ENCODE measurements at regions of chr1 and their contacts with region 1.

Region 1: DNA sequence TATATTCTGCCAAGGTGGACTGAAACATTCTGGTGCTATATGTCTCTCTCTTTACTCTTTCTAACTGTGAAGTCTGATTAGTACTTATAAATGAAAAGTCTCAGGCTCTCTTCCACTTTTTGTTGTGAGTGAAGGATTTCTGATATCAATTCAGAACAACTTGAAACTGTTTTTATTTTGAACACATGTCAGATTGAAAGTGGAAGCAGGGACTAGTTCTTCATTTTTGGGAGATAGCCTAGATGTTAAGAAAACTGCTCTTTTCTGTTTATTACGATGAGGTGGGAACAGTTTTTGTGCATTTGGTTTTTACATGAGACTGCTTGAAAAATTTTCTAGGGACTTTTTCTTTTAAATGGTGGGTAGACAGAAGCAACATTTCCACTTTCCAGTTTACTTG is 14.5 kb upstream of the GBP3 start:
- DNase-seq: no peak
- ATAC-seq: no peak
- H3K4me3 ChIP-seq: no peak overlapping the region
- H3K4me3 Mint-ChIP-seq: no peak overlapping the region
- H3K27ac ChIP-seq: no peak overlapping the region
- H3K27ac Mint-ChIP-seq: no peak overlapping the region
- H3K4me1 ChIP-seq: peaks cover 19 to 20% of the 10 kb centered on the region in 2 donors
- H3K4me1 Mint-ChIP-seq: peaks cover 11 to 55% (median 43%) of the 10 kb centered on the region in 7 donors
- H3K27me3 ChIP-seq: no peaks in the 10 kb centered on the region
- H3K27me3 Mint-ChIP-seq: peaks cover 0 to 5% (median 0%) of the 10 kb centered on the region in 5 donors

Region 2: GRCh38 chr1:89022167-89022959 is 14.8 kb before region 1 on chr1 and contains the start of gene GBP3:
- CTCF ChIA-PET with region 1: interaction called, 3 read pairs
- POLR2A ChIA-PET with region 1: interaction called, 30 read pairs
- intact Hi-C with region 1: loop called in 1 of 2 experiments (anchors 1 kb)
- DNase-seq: peak in 7 of 9 donors; percentile 22 to 52 (median 41)
- ATAC-seq: peak; percentile 84
- H3K4me3 ChIP-seq: peak within 1 kb of the TSS; percentile 75
- H3K4me3 Mint-ChIP-seq: peak within 1 kb of the TSS; percentile 83 to 99 (median 95)
- H3K27ac ChIP-seq: peak within 1 kb of the TSS; percentile 84
- H3K27ac Mint-ChIP-seq: peak within 1 kb of the TSS; percentile 85 to 99 (median 93)
- H3K4me1 ChIP-seq: peaks cover 16 to 21% of the 10 kb centered on the region in 2 donors
- H3K4me1 Mint-ChIP-seq: peaks cover 30 to 58% (median 48%) of the 10 kb centered on the region in 7 donors
- H3K27me3 ChIP-seq: no peaks in the 10 kb centered on the region
- H3K27me3 Mint-ChIP-seq: no peaks in the 10 kb centered on the region
- total RNA-seq, gene GBP3: 15.9 to 39.9 (median 31.9) TPM

Region 3: DNA sequence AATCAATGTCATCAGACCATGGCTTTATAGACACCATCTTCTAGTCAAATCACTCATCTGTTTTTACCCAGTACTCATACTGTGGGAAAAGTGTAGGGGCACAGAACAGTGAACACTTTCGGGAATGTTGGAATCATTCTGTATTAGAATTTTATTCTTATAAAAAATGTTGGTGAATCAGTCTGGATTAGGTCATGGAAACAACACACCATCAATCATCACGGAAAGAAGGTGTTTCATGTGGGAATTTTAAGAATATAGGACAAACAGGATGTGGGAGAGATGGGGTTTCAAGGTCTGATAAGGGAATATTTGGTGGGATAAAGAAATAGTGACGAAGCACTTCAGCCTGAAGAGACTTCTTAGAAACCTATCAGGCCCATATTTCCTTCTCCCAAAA is 10.5 kb after region 1 on chr1:
- CTCF ChIA-PET with region 1: no interaction called
- POLR2A ChIA-PET with region 1: interaction called, 3 read pairs
- intact Hi-C with region 1: loop called in 1 of 2 experiments (anchors 2 kb)
- DNase-seq: no peak
- ATAC-seq: no peak
- H3K4me3 ChIP-seq: no peak overlapping the region
- H3K4me3 Mint-ChIP-seq: no peak overlapping the region
- H3K27ac ChIP-seq: no peak overlapping the region
- H3K27ac Mint-ChIP-seq: peak overlapping the region in 3 of 9 donors; percentile 41 to 71 (median 43)
- H3K4me1 ChIP-seq: no peaks in the 10 kb centered on the region
- H3K4me1 Mint-ChIP-seq: peaks cover 0 to 15% (median 4%) of the 10 kb centered on the region in 7 donors
- H3K27me3 ChIP-seq: no peaks in the 10 kb centered on the region
- H3K27me3 Mint-ChIP-seq: no peaks in the 10 kb centered on the region